Activated naive CD4-positive, alpha-beta T cell treated with anti-CD3 and anti-CD28 coated beads for 36 hours (primary cell): ENCODE measurements at regions of chr19 and their contacts with region 1.

Region 1: DNA sequence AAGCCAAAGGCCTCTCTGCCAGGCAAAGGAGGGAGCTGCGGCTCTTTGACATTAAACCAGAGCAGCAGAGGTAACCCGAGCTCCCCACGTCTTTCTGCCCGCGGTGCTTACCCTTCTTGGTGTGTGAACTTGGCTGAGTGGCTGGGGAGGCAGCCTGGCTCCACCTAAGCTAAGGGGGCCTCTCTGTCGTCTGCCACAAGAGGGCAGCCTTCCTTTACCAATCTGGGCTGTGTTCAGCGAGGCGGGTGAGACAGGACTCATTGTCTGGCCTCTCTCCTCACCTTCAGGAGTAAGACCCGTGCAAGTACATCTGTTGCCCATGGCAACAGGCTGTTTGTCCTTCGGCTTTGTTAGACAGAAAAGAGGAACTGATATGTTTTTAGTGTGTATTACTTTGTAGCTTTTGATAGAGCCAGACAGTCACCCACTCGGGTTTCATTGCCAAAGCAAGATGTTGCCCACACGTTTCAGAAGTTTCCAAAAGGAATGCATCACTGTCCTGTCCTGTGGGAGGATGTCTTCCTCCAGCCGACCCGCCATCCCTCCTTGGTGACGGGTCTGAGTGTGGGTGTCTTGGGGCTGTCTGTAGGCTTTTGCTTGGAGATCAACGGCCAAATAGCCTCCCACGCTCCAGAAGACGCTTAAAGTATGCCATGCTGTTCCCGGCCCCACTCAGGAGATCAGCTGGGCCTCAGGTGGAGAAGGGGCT is 4.6 kb downstream of the POP4 start:
- DNase-seq: peak; percentile 92
- H3K4me3 Mint-ChIP-seq: no peak overlapping the region
- H3K27ac Mint-ChIP-seq: no peak overlapping the region
- H3K4me1 Mint-ChIP-seq: peaks cover 24% of the 10 kb centered on the region
- H3K27me3 Mint-ChIP-seq: no peaks in the 10 kb centered on the region

Region 2: DNA sequence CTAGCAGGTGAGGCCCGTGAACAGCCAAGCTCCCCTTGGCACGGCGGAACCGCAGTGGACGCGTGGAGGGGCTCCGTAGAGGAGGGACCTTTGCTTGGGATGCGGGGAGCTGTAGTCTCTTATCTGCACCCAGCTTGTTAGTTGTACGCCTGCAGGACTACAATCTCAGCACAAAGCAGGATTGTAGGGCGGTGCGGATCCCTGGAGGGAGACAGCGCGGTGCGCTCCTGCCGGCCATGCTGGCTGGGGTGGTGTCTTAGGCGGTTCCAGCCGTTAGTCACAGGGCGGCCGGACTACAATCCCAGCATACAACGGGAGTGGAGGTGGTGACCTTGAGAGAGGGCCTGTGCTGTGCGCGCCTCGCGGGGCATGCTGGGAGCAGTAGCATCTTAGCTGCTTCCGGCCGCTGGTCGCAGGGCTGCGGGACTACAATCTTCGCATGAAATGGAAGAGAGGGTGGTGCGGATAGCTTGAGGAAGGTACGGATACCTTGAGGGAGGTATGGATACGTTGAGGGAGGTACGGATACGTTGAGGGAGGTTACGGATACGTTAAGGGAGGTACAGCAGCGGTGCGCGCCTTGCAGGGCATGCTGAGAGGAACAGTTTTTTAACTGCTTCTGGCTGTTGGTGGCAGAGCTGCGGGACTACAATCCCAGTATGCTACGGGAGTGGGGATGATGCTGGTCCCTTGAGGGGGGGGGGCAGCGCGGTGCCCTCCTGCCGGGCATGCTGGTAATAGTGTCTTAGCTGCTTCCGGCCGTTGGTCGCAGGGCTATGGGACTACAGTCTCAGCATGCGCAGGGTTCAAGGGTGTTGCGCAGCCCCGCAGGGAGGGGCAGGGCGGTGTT is 1816.8 kb before region 1 on chr19:
- CTCF ChIA-PET with region 1: no interaction called
- intact Hi-C with region 1: loop called (anchors 5 kb)
- DNase-seq: peak; percentile 94
- H3K4me3 Mint-ChIP-seq: peak overlapping the region; percentile 85
- H3K27ac Mint-ChIP-seq: peak overlapping the region; percentile 89
- H3K4me1 Mint-ChIP-seq: peaks cover 16% of the 10 kb centered on the region
- H3K27me3 Mint-ChIP-seq: no peaks in the 10 kb centered on the region

Region 3: DNA sequence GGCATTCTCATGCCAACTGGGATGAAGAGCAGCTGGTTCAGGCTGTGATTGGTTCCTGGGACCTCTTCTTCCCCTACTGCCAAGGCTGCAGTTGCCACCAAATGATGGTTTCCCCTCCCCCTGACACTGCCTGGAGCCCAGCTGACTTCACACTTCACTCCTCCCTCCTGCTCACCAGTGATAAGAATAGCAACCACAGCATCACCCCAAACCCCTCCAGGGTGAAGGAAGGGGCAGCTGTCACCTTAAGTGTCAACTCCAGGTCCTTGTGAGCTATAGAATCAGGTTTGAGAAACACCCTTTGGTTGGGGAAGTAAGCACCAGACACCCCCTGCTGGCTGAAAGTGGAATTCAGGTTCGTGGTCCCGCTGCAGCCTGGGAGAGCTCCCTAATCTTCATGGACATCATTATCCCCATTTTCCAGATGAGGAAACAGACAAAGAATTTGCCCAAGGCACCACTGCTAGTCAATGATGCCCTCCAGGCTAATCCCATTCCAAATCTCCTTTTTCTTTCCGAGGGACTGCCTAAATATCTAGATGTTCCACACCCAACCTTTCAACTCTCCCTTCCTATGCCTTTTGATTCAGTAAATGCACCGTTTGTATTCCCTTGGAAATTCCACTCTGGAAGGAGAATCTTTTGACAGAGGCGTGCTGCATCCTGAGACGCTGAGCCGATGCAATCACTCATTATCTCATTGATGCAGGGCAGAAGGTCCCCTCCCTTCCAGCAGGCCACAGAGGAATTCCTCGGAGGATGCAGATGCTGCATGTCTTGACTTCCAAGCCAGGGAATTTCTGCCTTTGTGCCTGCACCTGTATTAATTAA is 347.2 kb before region 1 on chr19:
- CTCF ChIA-PET with region 1: interaction called, 4 read pairs
- intact Hi-C with region 1: loop called (anchors 10 kb)
- DNase-seq: peak; percentile 72
- H3K4me3 Mint-ChIP-seq: no peak overlapping the region
- H3K27ac Mint-ChIP-seq: no peak overlapping the region
- H3K4me1 Mint-ChIP-seq: no peaks in the 10 kb centered on the region
- H3K27me3 Mint-ChIP-seq: peaks cover 19% of the 10 kb centered on the region

Region 4: GRCh38 chr19:29528350-29528945 is 82.3 kb before region 1 on chr19:
- CTCF ChIA-PET with region 1: no interaction called
- intact Hi-C with region 1: no loop called
- DNase-seq: peak; percentile 81
- H3K4me3 Mint-ChIP-seq: peak overlapping the region; percentile 49
- H3K27ac Mint-ChIP-seq: no peak overlapping the region
- H3K4me1 Mint-ChIP-seq: peaks cover 29% of the 10 kb centered on the region
- H3K27me3 Mint-ChIP-seq: peaks cover 67% of the 10 kb centered on the region

Region 5: DNA sequence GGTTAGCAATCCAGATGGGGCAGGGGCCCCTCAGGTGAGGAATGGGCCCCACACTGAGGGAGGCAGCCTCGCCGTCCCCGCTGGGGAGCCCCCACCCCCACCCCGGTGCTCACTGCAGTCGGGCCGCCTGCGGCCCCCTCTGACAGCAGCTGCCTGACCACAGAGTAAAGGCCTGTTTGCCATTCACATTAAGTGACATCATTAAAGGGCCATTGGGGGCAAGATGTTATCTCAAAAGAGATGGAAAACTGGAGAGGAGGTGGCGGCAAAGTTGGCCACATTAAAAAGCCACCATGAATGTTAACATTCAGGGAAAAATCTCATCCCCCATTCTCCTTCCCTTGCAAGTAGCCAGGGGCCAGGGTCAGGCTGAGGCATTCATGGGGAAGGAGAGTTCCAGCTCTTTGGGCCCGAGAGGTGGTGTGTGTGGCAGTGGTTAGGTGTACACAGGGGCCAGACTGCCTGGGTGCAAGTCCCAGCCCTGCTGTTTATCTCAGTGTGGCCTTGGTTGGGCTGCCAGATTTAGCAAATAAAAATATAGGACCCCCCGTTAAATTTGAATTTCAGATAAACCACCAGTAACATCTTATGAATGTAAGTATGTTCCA is 64.0 kb before region 1 on chr19:
- CTCF ChIA-PET with region 1: no interaction called
- intact Hi-C with region 1: no loop called
- DNase-seq: no peak
- H3K4me3 Mint-ChIP-seq: no peak overlapping the region
- H3K27ac Mint-ChIP-seq: no peak overlapping the region
- H3K4me1 Mint-ChIP-seq: no peaks in the 10 kb centered on the region
- H3K27me3 Mint-ChIP-seq: peaks cover 20% of the 10 kb centered on the region

Region 6: DNA sequence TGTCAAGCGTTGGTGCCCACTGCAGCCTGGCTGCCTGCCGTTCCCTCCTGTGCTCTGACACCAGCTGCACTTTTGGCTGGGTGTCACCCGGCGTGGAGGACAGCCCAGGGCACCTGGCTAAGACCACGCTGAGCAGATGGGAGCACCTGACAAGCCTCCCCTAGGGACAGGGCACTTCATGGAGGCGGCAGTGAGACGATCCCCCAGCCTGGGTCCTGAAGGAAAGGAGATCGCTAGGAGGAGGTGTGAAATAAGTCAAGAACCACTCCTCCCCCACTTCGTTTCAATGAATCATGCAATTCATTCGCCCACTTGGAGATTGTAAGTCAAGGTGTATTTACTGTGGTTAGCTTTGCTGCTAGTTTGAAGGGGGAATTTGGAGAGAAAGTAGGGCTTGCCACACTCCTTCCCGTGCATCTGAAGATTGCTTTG is 46.1 kb before region 1 on chr19:
- CTCF ChIA-PET with region 1: no interaction called
- intact Hi-C with region 1: no loop called
- DNase-seq: no peak
- H3K4me3 Mint-ChIP-seq: no peak overlapping the region
- H3K27ac Mint-ChIP-seq: no peak overlapping the region
- H3K4me1 Mint-ChIP-seq: peaks cover 9% of the 10 kb centered on the region
- H3K27me3 Mint-ChIP-seq: peaks cover 28% of the 10 kb centered on the region

Region 7: DNA sequence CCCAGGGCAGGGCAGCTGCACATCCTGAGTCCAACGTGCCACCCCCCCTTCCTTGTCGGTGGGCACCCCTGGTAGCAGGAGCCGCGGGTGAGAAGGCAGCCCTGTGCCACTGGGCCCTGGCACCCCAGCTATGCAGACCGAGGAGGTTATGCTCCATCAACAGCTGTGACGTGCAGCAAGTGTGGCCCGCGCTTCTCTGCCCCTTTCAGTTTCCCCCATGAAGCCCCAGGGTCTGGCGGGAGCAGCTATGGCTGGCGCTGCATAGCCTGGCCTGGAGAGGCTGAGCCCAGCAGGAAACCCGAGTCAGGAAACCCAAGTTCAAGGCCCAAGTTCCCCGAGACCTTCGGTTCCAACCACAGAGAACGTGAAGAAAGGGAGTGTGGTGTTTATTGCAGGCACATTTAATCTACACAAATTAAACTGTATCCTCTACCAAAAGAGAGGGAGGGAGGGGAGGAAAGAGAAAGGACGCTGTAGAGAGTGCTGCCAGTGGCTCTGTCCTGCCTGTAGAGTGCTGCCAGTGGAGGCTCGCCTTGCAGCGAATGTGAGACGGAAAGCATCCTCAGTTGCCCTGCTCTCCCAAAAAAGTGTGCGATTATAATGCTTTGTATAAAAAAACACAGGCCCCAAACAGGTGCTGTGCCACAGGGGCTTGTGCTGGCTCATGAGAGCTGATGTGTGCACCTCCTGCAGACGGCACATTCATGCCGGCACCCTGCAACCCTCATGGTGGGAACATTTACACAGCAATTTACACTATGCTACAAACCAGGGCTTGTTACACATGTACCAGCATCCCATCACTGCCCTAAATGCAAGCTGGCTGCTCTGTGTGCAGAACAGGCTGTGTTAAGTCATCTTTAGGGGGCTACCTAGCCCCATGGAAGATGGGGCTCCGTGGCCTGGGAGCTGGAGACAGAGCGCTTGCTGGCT is 11.7 kb after region 1 on chr19:
- CTCF ChIA-PET with region 1: interaction called, 55 read pairs
- intact Hi-C with region 1: no loop called
- DNase-seq: peak; percentile 23
- H3K4me3 Mint-ChIP-seq: no peak overlapping the region
- H3K27ac Mint-ChIP-seq: no peak overlapping the region
- H3K4me1 Mint-ChIP-seq: peaks cover 33% of the 10 kb centered on the region
- H3K27me3 Mint-ChIP-seq: no peaks in the 10 kb centered on the region

Region 8: GRCh38 chr19:29680447-29680846 is 69.7 kb after region 1 on chr19:
- CTCF ChIA-PET with region 1: interaction called, 18 read pairs
- intact Hi-C with region 1: no loop called
- DNase-seq: peak; percentile 95
- H3K4me3 Mint-ChIP-seq: peak overlapping the region; percentile 66
- H3K27ac Mint-ChIP-seq: peak overlapping the region; percentile 91
- H3K4me1 Mint-ChIP-seq: peaks cover 53% of the 10 kb centered on the region
- H3K27me3 Mint-ChIP-seq: no peaks in the 10 kb centered on the region

Region 9: DNA sequence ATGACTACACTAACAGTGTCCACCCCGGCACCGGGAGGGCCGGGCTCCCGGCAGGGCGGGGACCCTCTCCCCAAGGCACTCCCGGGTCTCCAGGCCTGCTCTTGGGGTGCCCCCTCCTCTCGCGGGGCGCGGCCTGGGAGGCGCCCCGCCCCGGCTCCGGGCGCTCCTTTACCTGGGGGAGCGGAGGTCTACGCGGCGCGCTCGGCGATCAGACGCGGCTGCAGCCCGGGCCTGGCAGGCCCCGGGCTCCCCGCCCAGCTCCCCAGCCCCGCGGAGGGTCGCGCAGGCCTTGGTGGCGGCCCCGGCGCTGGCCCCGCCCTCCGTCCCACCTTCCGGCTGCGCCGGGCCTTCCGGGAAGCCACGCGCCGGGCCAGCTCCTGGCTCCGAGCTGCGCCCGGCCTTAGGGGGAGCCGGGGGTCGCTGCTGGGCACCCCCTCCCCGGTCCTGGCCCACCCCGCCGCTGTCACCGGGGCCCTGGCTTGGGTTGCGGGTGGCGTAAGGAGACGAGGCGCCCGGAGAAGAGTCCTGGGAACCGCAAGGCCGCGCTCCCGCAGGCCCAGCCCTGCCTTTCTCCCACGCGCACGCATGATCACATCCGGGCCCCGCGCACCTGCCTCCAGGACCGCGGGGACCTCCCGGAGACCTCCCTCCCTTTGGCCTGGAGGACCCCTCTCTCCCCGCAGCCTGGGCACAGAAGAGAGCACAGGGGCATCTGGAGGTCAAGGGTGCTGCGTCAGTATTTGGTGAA is 104.4 kb after region 1 on chr19 and contains the start of gene C19orf12:
- CTCF ChIA-PET with region 1: interaction called, 82 read pairs
- intact Hi-C with region 1: loop called (anchors 1 kb)
- DNase-seq: peak; percentile 69
- H3K4me3 Mint-ChIP-seq: peak within 1 kb of the TSS; percentile 92
- H3K27ac Mint-ChIP-seq: peak within 1 kb of the TSS; percentile 97
- H3K4me1 Mint-ChIP-seq: peaks cover 47% of the 10 kb centered on the region
- H3K27me3 Mint-ChIP-seq: no peaks in the 10 kb centered on the region
- total RNA-seq, gene C19orf12: 21.6 to 24.3 TPM

Region 10: GRCh38 chr19:29941828-29942403 is 331.2 kb after region 1 on chr19 and contains the start of gene URI1:
- CTCF ChIA-PET with region 1: interaction called, 3 read pairs
- intact Hi-C with region 1: loop called (anchors 1 kb)
- DNase-seq: peak; percentile 94
- H3K4me3 Mint-ChIP-seq: peak within 1 kb of the TSS; percentile 97
- H3K27ac Mint-ChIP-seq: peak within 1 kb of the TSS; percentile 90
- H3K4me1 Mint-ChIP-seq: peaks cover 38% of the 10 kb centered on the region
- H3K27me3 Mint-ChIP-seq: peaks cover 2% of the 10 kb centered on the region
- total RNA-seq, gene URI1: 65.9 to 69.8 TPM